Activated CD4-positive, alpha-beta T cell treated with anti-CD3 and anti-CD28 coated beads, Interleukin-2, amount 10 ng/mL, durations not matched to agents 24 days and 14 days (primary cell): ENCODE measurements at regions of chr20 and their contacts with region 1.

Region 1: GRCh38 chr20:55538261-55538908 is 466.9 kb downstream of the CBLN4 start:
- DNase-seq: no peak
- H3K4me3 Mint-ChIP-seq: no peak overlapping the region
- H3K27ac Mint-ChIP-seq: no peak overlapping the region
- H3K4me1 Mint-ChIP-seq: no peaks in the 10 kb centered on the region
- H3K27me3 Mint-ChIP-seq: no peaks in the 10 kb centered on the region

Region 2: GRCh38 chr20:55569084-55569483 is 30.7 kb after region 1 on chr20:
- intact Hi-C with region 1: loop called (anchors 1 kb)
- DNase-seq: no peak
- H3K4me3 Mint-ChIP-seq: no peak overlapping the region
- H3K27ac Mint-ChIP-seq: no peak overlapping the region
- H3K4me1 Mint-ChIP-seq: no peaks in the 10 kb centered on the region
- H3K27me3 Mint-ChIP-seq: no peaks in the 10 kb centered on the region

Region 3: GRCh38 chr20:55614220-55614757 is 75.9 kb after region 1 on chr20:
- intact Hi-C with region 1: no loop called
- DNase-seq: no peak
- H3K4me3 Mint-ChIP-seq: no peak overlapping the region
- H3K27ac Mint-ChIP-seq: no peak overlapping the region
- H3K4me1 Mint-ChIP-seq: no peaks in the 10 kb centered on the region
- H3K27me3 Mint-ChIP-seq: no peaks in the 10 kb centered on the region